Adrenal gland (tissue), 19 donors: ENCODE measurements at regions of chr7 and their contacts with region 1.

Region 1: GRCh38 chr7:26864309-26865093 is at the start of gene SKAP2:
- DNase-seq: peak; percentile 99 to 100 (median 99)
- H3K4me3 ChIP-seq: peak within 1 kb of the TSS; percentile 82 to 97 (median 90)
- H3K27ac ChIP-seq: peak within 1 kb of the TSS; percentile 91 to 99 (median 97)
- H3K4me1 ChIP-seq: peaks cover 0 to 29% of the 10 kb centered on the region in 2 donors
- H3K27me3 ChIP-seq: no peaks in the 10 kb centered on the region
- CTCF ChIP-seq: no peak
- POLR2A ChIP-seq: peak; percentile 96 to 99
- total RNA-seq, gene SKAP2: 27.0 to 123 (median 55.2) TPM

Region 2: DNA sequence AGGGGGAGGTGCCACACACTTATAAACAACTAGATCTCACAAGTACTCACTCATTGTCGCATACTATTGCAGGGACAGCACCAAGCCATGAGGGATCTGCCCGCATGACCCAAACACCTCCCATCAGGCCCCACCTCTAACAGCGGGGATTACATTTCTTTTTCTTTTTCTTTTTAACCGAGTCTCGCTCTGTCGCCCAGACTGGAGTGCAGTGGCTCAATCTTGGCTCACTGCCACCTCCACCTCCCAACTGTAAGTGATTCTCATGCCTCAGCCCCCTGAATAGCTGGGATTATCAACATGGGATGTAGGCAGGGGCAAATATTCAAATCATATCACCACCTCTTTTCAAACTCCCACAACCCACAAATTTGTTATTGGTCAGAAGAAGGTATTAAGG is 76.8 kb before region 1 on chr7:
- intact Hi-C with region 1: no loop called
- DNase-seq: no peak
- H3K4me3 ChIP-seq: no peak overlapping the region
- H3K27ac ChIP-seq: no peak overlapping the region
- H3K4me1 ChIP-seq: no peaks in the 10 kb centered on the region
- H3K27me3 ChIP-seq: no peaks in the 10 kb centered on the region
- CTCF ChIP-seq: no peak
- POLR2A ChIP-seq: no peak

Region 3: GRCh38 chr7:26918241-26918640 is 53.7 kb after region 1 on chr7:
- intact Hi-C with region 1: no loop called
- DNase-seq: no peak
- H3K4me3 ChIP-seq: no peak overlapping the region
- H3K27ac ChIP-seq: no peak overlapping the region
- H3K4me1 ChIP-seq: no peaks in the 10 kb centered on the region
- H3K27me3 ChIP-seq: no peaks in the 10 kb centered on the region
- CTCF ChIP-seq: no peak
- POLR2A ChIP-seq: no peak

Region 4: GRCh38 chr7:27095897-27096767 is 231.6 kb after region 1 on chr7 and contains the start of gene HOXA1:
- intact Hi-C with region 1: loop called (anchors 10 kb)
- DNase-seq: peak; percentile 83 to 92 (median 89)
- H3K4me3 ChIP-seq: peak within 1 kb of the TSS; percentile 51 to 83 (median 76)
- H3K27ac ChIP-seq: peak within 1 kb of the TSS; percentile 56 to 95 (median 85)
- H3K4me1 ChIP-seq: peaks cover 22 to 26% of the 10 kb centered on the region in 2 donors
- H3K27me3 ChIP-seq: no peaks in the 10 kb centered on the region
- CTCF ChIP-seq: no peak
- POLR2A ChIP-seq: peak; percentile 57 to 82
- total RNA-seq, gene HOXA1: 0.18 to 4.4 (median 0.90) TPM in 8 of 9 donors, not detected in the other

Region 5: DNA sequence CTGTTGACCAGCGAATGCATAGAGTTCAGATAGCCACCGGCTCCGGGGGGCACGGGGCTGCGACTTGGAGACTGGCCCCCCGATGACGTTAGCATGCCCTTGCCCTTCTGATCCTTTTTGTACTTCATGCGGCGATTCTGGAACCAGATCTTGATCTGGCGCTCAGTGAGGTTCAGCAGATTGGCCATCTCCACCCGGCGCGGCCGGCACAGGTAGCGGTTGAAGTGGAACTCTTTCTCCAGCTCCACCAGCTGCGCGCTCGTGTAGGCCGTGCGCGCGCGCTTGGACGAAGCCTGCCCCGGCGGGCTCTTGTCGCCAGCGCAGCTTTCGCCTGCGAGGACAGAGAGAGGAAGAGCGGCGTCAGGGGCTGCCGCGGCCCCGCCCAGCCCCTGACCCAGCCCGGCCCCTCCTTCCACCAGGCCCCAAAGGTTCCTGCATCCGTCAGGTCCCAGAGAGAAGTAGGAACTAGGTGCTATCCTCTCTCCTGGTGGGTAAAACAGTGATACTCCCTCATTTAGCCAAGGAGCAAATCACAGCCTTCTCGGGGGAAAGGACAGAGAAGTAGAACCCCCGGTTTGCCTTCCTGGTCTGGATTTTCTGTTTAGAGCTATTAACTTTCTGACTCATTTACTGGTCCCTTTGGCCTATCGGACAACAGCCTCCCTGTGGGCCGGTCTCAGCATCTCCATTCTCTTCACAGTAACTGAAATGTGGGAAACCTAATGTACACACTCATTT is 244.1 kb after region 1 on chr7:
- intact Hi-C with region 1: loop called in 1 of 2 experiments (anchors 10 kb)
- DNase-seq: peak in 3 of 7 donors; percentile 67 to 71 (median 69)
- H3K4me3 ChIP-seq: peak overlapping the region in 2 of 4 donors; percentile 2 to 45
- H3K27ac ChIP-seq: peak overlapping the region; percentile 39 to 97 (median 61)
- H3K4me1 ChIP-seq: peaks cover 0 to 17% of the 10 kb centered on the region in 2 donors
- H3K27me3 ChIP-seq: no peaks in the 10 kb centered on the region
- CTCF ChIP-seq: peak in 2 of 6 experiments; percentile 23 to 33
- POLR2A ChIP-seq: peak in 1 of 2 donors; percentile 71